BJ (cell line): ENCODE measurements at regions of chr14 and their contacts with region 1.

Region 1: DNA sequence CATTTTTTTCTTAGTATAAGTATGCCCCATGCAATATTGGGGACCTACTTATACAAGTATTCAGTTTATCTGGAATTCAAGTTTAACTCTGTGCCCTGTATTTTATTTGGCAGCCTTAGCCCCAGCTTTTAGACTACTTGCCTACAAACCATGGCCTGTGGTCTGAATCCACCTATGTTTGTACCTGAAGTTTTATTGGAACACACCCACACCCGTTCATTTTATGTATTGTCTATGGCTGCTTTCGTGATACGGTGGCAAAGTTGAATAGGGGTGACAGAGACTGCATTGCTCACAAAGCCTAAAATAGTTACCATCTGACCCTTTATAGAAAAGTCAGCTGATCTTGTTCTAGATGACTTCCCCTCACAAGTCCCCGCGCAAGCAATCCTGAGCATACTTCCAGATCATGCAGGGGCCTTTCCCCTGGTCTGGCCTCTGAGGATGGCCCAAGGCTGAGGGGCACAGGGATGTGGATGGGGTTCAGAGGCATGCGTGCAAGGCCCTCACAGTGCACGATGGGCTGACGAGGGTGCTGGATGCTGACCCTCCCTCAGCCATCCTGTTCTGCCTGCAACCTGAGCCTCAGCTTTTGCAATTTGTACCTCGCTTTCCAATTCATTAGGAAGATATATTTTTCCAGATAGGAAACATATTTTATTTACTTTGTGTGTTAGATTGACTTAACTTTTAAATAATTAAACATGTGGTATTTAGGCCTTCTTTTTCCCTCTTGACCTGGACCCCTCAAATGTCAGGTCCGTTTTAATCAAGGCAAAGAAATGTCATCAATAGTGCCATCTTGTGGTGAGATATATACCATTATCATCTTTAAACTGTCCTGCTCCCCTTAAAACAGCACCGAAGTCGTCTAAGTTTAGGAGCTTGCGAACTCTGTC is 527.3 kb upstream of the CCDC196 start:
- DNase-seq: no peak
- H3K4me3 ChIP-seq: no peak overlapping the region
- H3K27me3 ChIP-seq: no peaks in the 10 kb centered on the region
- CTCF ChIP-seq: peak; percentile 36

Region 2: GRCh38 chr14:65941091-65941490 is 17.8 kb before region 1 on chr14:
- CTCF ChIA-PET with region 1: interaction called, 10 read pairs
- POLR2A ChIA-PET with region 1: no interaction called
- DNase-seq: no peak
- H3K4me3 ChIP-seq: no peak overlapping the region
- H3K27me3 ChIP-seq: no peaks in the 10 kb centered on the region
- CTCF ChIP-seq: no peak